GM12878 (cell line): ENCODE measurements at regions of chr9 and their contacts with region 1.

Region 1: GRCh38 chr9:114282926-114283325 is 40.0 kb upstream of the ORM1 start:
- DNase-seq: no peak
- ATAC-seq: peak; percentile 74
- H3K4me3 ChIP-seq: no peak overlapping the region
- H3K27ac ChIP-seq: no peak overlapping the region
- H3K4me1 ChIP-seq: no peaks in the 10 kb centered on the region
- H3K27me3 ChIP-seq: peaks cover 0 to 3% of the 10 kb centered on the region in 2 experiments; a peak in 1 of 4 replicates
- CTCF ChIP-seq: no peak
- EP300 ChIP-seq: no peak
- POLR2A ChIP-seq: no peak
- RAD21 ChIP-seq: no peak

Region 2: GRCh38 chr9:114155263-114155972 is 127.5 kb before region 1 on chr9 and contains the start of gene COL27A1:
- CTCF ChIA-PET with region 1: no interaction called
- POLR2A ChIA-PET with region 1: no interaction called
- RAD21 ChIA-PET with region 1: no interaction called
- SMC1A ChIA-PET with region 1: no interaction called
- in situ Hi-C with region 1: loop called (anchors 10 kb)
- intact Hi-C with region 1: no loop called
- DNase-seq: no peak
- ATAC-seq: peak; percentile 100
- H3K4me3 ChIP-seq: no peak within 1 kb of the TSS
- H3K27ac ChIP-seq: no peak within 1 kb of the TSS
- H3K4me1 ChIP-seq: no peaks in the 10 kb centered on the region
- H3K27me3 ChIP-seq: peaks cover 10 to 11% of the 10 kb centered on the region in 2 experiments; a peak in 3 of 4 replicates
- CTCF ChIP-seq: peak; percentile 63 to 90 (median 80)
- EP300 ChIP-seq: no peak
- POLR2A ChIP-seq: no peak
- RAD21 ChIP-seq: peak; percentile 58
- polyA plus RNA-seq, gene COL27A1: not detected

Region 3: GRCh38 chr9:114207034-114207810 is 75.7 kb before region 1 on chr9:
- CTCF ChIA-PET with region 1: no interaction called
- POLR2A ChIA-PET with region 1: no interaction called
- RAD21 ChIA-PET with region 1: no interaction called
- SMC1A ChIA-PET with region 1: no interaction called
- in situ Hi-C with region 1: no loop called
- intact Hi-C with region 1: no loop called
- DNase-seq: no peak
- ATAC-seq: no peak
- H3K4me3 ChIP-seq: no peak overlapping the region
- H3K27ac ChIP-seq: no peak overlapping the region
- H3K4me1 ChIP-seq: no peaks in the 10 kb centered on the region
- H3K27me3 ChIP-seq: peaks cover 0 to 2% of the 10 kb centered on the region in 2 experiments; a peak in 2 of 4 replicates
- CTCF ChIP-seq: no peak
- EP300 ChIP-seq: no peak
- POLR2A ChIP-seq: no peak
- RAD21 ChIP-seq: no peak

Region 4: GRCh38 chr9:114271641-114272081 is 11.3 kb before region 1 on chr9:
- CTCF ChIA-PET with region 1: no interaction called
- POLR2A ChIA-PET with region 1: no interaction called
- RAD21 ChIA-PET with region 1: no interaction called
- SMC1A ChIA-PET with region 1: no interaction called
- in situ Hi-C with region 1: no loop called
- intact Hi-C with region 1: no loop called
- DNase-seq: no peak
- ATAC-seq: peak; percentile 63
- H3K4me3 ChIP-seq: no peak overlapping the region
- H3K27ac ChIP-seq: no peak overlapping the region
- H3K4me1 ChIP-seq: no peaks in the 10 kb centered on the region
- H3K27me3 ChIP-seq: peaks cover 0 to 4% of the 10 kb centered on the region in 2 experiments; a peak in 2 of 4 replicates
- CTCF ChIP-seq: peak in 2 of 3 experiments; percentile 18 to 27; a peak in 3 of 6 replicates
- EP300 ChIP-seq: no peak
- POLR2A ChIP-seq: no peak
- RAD21 ChIP-seq: 0 out of 2 replicates have a peak, but pooled peaks have one; percentile 4

Region 5: DNA sequence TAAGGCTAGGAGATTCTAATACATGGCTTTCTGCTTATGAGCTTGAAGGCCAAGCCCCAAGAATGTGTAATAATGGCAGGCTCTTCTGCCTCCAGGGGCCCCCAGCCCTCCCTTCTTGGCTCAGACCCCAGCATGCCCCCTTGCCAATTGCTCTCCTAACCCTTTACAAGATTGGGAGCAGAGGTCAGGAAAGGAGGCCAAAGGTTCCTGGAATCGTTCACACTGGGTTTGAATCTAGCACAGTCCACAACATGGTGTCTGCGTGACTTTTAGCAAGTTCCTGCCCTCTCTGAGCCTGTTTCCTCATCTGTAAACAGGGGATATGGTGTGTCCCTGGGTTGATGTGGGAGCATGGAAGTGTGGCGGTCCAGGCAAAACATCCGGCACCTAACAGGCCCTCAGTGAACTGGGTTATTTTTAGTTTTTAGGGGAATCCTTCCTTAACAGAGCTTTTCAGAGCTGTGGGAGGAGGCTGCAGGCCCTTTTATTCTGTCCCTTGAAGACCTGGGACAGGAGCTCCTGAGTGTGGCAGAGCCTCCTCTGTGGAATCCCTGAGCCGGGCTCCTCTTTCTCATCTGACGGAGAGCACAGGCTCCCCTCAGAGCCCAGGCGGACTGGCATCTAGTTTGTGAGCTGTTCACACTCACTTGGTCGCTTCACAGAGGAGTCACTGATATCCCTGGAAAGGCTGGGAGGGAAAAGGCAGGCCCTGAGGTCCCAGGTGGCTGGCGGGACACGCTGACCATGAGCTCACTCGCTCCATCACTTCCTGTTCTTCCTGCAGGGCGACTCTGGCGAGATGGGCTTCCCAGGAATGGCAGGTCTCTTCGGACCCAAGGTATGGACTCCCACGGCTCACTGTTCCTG is 16.6 kb after region 1 on chr9:
- CTCF ChIA-PET with region 1: no interaction called
- POLR2A ChIA-PET with region 1: no interaction called
- RAD21 ChIA-PET with region 1: no interaction called
- SMC1A ChIA-PET with region 1: no interaction called
- in situ Hi-C with region 1: no loop called
- intact Hi-C with region 1: no loop called
- DNase-seq: no peak
- ATAC-seq: no peak
- H3K4me3 ChIP-seq: no peak overlapping the region
- H3K27ac ChIP-seq: no peak overlapping the region
- H3K4me1 ChIP-seq: no peaks in the 10 kb centered on the region
- H3K27me3 ChIP-seq: peaks cover 0 to 8% of the 10 kb centered on the region in 2 experiments; a peak in 2 of 4 replicates
- CTCF ChIP-seq: no peak
- EP300 ChIP-seq: no peak
- POLR2A ChIP-seq: no peak
- RAD21 ChIP-seq: no peak

Region 6: DNA sequence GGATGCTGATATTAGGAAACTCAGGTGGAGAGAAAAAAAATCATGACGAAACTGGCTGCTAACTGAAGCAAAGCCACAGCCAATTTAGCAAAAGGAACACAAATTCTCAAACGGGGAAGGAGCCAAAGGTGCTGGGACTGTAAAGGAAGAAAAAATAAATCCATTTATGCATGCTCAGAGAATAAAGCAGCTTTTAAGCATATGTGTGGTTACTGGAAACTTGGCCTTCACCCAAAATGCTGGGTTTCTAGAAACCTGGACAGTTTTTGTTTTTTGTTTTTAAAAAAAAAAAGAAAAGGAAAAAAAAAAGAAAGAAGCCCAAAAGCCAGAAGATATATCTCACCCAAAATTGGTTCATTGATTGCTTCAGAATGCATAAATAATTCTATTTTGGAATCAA is 214.3 kb after region 1 on chr9:
- CTCF ChIA-PET with region 1: no interaction called
- POLR2A ChIA-PET with region 1: no interaction called
- RAD21 ChIA-PET with region 1: no interaction called
- SMC1A ChIA-PET with region 1: no interaction called
- in situ Hi-C with region 1: no loop called
- intact Hi-C with region 1: no loop called
- DNase-seq: no peak
- ATAC-seq: no peak
- H3K4me3 ChIP-seq: no peak overlapping the region
- H3K27ac ChIP-seq: no peak overlapping the region
- H3K4me1 ChIP-seq: no peaks in the 10 kb centered on the region; the same call in 1 of the 2 replicates
- H3K27me3 ChIP-seq: peaks cover 0 to 6% of the 10 kb centered on the region in 2 experiments; a peak in 2 of 4 replicates
- CTCF ChIP-seq: no peak
- EP300 ChIP-seq: no peak
- POLR2A ChIP-seq: no peak
- RAD21 ChIP-seq: no peak